Activated CD4-positive, alpha-beta memory T cell treated with anti-CD3 and anti-CD28 coated beads for 36 hours (primary cell): ENCODE measurements at regions of chr4 and their contacts with region 1.

Region 1: GRCh38 chr4:80335554-80336358 is at the start of gene CFAP299:
- DNase-seq: peak; percentile 74
- H3K4me3 Mint-ChIP-seq: peak within 1 kb of the TSS; percentile 75
- H3K27ac Mint-ChIP-seq: no peak within 1 kb of the TSS
- H3K4me1 Mint-ChIP-seq: peaks cover 10% of the 10 kb centered on the region
- H3K27me3 Mint-ChIP-seq: peaks cover 19% of the 10 kb centered on the region
- total RNA-seq, gene CFAP299: not detected

Region 2: GRCh38 chr4:79439489-79439888 is 896.3 kb before region 1 on chr4:
- CTCF ChIA-PET with region 1: no interaction called
- POLR2A ChIA-PET with region 1: no interaction called
- intact Hi-C with region 1: no loop called
- DNase-seq: no peak
- H3K4me3 Mint-ChIP-seq: no peak overlapping the region
- H3K27ac Mint-ChIP-seq: no peak overlapping the region
- H3K4me1 Mint-ChIP-seq: no peaks in the 10 kb centered on the region
- H3K27me3 Mint-ChIP-seq: peaks cover 1% of the 10 kb centered on the region

Region 3: GRCh38 chr4:80221161-80221560 is 114.6 kb before region 1 on chr4:
- CTCF ChIA-PET with region 1: no interaction called
- POLR2A ChIA-PET with region 1: no interaction called
- intact Hi-C with region 1: loop called (anchors 10 kb)
- DNase-seq: no peak
- H3K4me3 Mint-ChIP-seq: no peak overlapping the region
- H3K27ac Mint-ChIP-seq: no peak overlapping the region
- H3K4me1 Mint-ChIP-seq: no peaks in the 10 kb centered on the region
- H3K27me3 Mint-ChIP-seq: peaks cover 15% of the 10 kb centered on the region

Region 4: DNA sequence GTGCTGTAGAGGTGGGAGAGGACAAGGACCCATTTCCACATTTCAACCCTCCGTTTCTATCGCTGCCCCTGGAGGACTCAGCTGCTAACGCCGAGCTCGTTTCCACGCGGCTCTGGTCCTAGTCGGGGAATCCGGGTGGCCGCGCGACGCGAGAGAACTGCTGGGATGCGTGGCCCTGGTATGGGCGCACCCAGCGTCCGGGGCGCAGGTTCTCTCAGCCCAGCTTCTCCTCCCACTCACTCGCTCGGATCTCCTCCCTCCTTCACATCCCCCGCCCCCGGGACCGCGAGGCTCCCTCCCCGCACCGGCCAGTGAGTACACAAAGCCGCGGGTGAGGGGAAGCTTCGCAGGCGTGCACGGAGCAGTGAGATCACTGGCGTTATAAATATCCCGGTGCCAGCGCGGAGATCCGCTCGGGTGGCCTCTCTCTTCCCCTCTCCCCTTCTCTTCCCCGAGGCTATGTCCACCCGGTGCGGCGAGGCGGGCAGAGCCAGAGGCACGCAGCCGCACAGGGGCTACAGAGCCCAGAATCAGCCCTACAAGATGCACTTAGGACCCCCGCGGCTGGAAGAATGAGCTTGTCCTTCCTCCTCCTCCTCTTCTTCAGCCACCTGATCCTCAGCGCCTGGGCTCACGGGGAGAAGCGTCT is 69.4 kb before region 1 on chr4 and contains the start of gene FGF5:
- CTCF ChIA-PET with region 1: interaction called, 3 read pairs
- POLR2A ChIA-PET with region 1: no interaction called
- intact Hi-C with region 1: loop called (anchors 5 kb)
- DNase-seq: peak; percentile 49
- H3K4me3 Mint-ChIP-seq: peak within 1 kb of the TSS; percentile 65
- H3K27ac Mint-ChIP-seq: no peak within 1 kb of the TSS
- H3K4me1 Mint-ChIP-seq: peaks cover 25% of the 10 kb centered on the region
- H3K27me3 Mint-ChIP-seq: peaks cover 73% of the 10 kb centered on the region
- total RNA-seq, gene FGF5: not detected

Region 5: GRCh38 chr4:81351654-81352445 is 1016.1 kb after region 1 on chr4:
- CTCF ChIA-PET with region 1: no interaction called
- POLR2A ChIA-PET with region 1: no interaction called
- intact Hi-C with region 1: no loop called
- DNase-seq: peak; percentile 75
- H3K4me3 Mint-ChIP-seq: no peak overlapping the region
- H3K27ac Mint-ChIP-seq: no peak overlapping the region
- H3K4me1 Mint-ChIP-seq: no peaks in the 10 kb centered on the region
- H3K27me3 Mint-ChIP-seq: peaks cover 3% of the 10 kb centered on the region